A549 (cell line): ENCODE measurements at regions of chr20 and their contacts with region 1.

Region 1: GRCh38 chr20:44310664-44311639 is at the start of gene FITM2:
- DNase-seq: peak; percentile 96 to 98
- ATAC-seq: peak; percentile 95 to 98
- H3K4me3 ChIP-seq: peak within 1 kb of the TSS; percentile 89
- H3K27ac ChIP-seq: peak within 1 kb of the TSS; percentile 92 to 95
- H3K4me1 ChIP-seq: peaks cover 7% of the 10 kb centered on the region; the same call in 2 of the 3 replicates
- CTCF ChIP-seq: peak; percentile 89
- EP300 ChIP-seq: no peak
- POLR2A ChIP-seq: peak; percentile 88
- RAD21 ChIP-seq: peak; percentile 79 to 88
- polyA plus RNA-seq, gene FITM2: 13.1 and 15.2 TPM in 2 replicates

Region 2: DNA sequence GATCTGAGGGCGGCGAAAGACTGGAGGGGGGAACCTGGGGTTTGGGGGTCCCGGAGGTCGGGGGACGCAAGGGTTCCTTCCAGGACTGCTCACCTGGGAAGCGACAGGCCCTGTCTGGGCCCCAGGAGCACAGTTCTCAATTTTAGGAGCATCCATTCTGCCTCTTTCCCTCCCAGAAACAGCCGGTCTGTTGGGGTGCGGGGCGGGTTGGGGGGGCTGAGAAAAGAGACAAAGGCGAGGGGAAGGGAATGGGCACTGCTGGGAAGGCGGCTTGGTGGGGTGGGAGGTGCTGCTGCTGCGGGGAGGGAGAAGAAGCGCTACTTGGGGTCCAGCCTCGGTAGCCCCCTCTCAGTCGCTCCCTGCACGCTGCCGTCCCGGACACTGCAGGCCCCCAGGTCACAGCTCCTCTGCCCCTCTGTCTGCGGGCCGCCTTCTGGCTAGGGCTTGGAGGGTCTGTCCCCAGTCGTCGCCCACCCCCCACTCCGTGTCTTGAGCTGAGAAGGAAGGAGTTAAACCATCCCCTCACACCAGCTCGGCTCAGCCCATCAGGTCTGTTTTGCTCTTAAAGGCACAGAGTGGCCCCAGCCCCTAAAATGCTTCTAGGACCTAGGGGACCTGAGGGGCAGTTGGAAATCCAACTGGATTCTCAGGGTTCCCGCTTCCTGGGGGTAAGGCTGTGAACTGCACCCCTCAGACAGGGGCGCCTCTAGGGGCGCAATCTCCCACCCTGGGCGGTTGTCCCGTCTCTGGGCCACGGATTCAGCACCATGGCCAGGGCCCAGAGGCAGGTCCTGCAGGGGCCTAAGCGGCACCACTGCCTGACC is 63.2 kb before region 1 on chr20:
- CTCF ChIA-PET with region 1: interaction called, 16 read pairs
- POLR2A ChIA-PET with region 1: no interaction called
- DNase-seq: peak; percentile 35 to 56
- ATAC-seq: peak; percentile 90 to 94
- H3K4me3 ChIP-seq: no peak overlapping the region
- H3K27ac ChIP-seq: no peak overlapping the region
- H3K4me1 ChIP-seq: no peaks in the 10 kb centered on the region
- CTCF ChIP-seq: peak; percentile 19; the same call in 1 of the 3 replicates
- EP300 ChIP-seq: no peak
- POLR2A ChIP-seq: no peak
- RAD21 ChIP-seq: peak in 1 of 2 experiments; percentile 14; a peak in 1 of 5 replicates

Region 3: GRCh38 chr20:44264287-44264686 is 46.7 kb before region 1 on chr20:
- CTCF ChIA-PET with region 1: interaction called, 16 read pairs
- POLR2A ChIA-PET with region 1: no interaction called
- DNase-seq: no peak
- ATAC-seq: no peak
- H3K4me3 ChIP-seq: no peak overlapping the region
- H3K27ac ChIP-seq: no peak overlapping the region
- H3K4me1 ChIP-seq: no peaks in the 10 kb centered on the region
- CTCF ChIP-seq: no peak
- EP300 ChIP-seq: no peak
- POLR2A ChIP-seq: no peak
- RAD21 ChIP-seq: no peak

Region 4: GRCh38 chr20:44282192-44282591 is 28.8 kb before region 1 on chr20:
- CTCF ChIA-PET with region 1: interaction called, 28 read pairs
- POLR2A ChIA-PET with region 1: no interaction called
- DNase-seq: no peak
- ATAC-seq: no peak
- H3K4me3 ChIP-seq: no peak overlapping the region
- H3K27ac ChIP-seq: no peak overlapping the region
- H3K4me1 ChIP-seq: peaks cover 20% of the 10 kb centered on the region
- CTCF ChIP-seq: no peak
- EP300 ChIP-seq: no peak
- POLR2A ChIP-seq: no peak
- RAD21 ChIP-seq: no peak

Region 5: DNA sequence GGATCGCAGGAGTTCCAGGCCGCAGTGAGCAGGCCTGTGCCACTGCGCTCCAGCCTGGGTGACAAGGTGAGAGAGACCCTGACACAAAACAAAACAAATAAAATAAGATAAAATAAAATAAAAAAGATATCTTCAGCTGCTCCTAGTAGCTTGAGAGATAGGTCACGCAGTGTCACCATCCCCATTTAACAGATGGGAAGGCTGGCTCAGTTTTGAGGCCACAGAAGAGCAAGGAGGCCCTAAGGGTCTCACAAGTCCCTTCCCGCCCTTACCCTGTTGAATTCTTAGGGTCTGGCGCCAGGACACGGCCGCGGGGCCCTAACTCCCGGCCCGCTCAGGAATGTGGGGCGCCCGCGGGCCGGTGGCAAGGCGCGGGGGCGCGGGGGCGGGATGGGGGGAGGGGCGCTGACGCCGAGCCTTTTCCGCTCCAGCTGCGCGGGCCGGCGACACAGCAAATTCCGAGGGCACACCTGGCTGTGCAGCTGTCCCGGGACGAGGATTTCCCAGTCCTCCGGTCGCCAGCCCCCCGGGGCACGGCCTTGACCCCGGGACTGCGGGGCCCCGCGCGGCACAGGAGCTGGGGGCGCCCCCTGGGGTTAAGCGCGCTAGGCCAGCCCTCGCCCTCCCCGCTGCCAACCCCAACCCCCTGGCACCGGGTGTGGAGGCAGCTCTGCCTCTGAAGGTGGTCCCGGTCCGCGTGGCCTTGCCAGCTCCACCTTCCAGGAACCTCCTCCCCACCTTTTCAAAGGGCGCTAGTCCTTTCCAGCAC is 15.6 kb after region 1 on chr20:
- CTCF ChIA-PET with region 1: interaction called, 134 read pairs
- POLR2A ChIA-PET with region 1: no interaction called
- DNase-seq: no peak
- ATAC-seq: peak in 1 of 2 experiments; percentile 28; a peak in 1 of 6 replicates
- H3K4me3 ChIP-seq: peak overlapping the region; percentile 24
- H3K27ac ChIP-seq: peak overlapping the region; percentile 61 to 78
- H3K4me1 ChIP-seq: peaks cover 14% of the 10 kb centered on the region
- CTCF ChIP-seq: no peak; the same call in 2 of the 3 replicates
- EP300 ChIP-seq: no peak
- POLR2A ChIP-seq: no peak
- RAD21 ChIP-seq: no peak